ENCODE measurements at regions of chr1 and their contacts with region 1.

Region 1: GRCh38 chr1:93345633-93346420 is at the start of gene DR1:
- DNase-seq: peak; percentile 93 to 97
- ATAC-seq: peak; percentile 88 to 94
- H3K4me3 ChIP-seq: peak within 1 kb of the TSS; percentile 82 to 97 (median 94)
- H3K27ac ChIP-seq: peak within 1 kb of the TSS; percentile 95 to 98 (median 96)
- H3K4me1 ChIP-seq: peaks cover 24 to 39% of the 10 kb centered on the region in 2 donors
- H3K27me3 ChIP-seq: no peaks in the 10 kb centered on the region
- CTCF ChIP-seq: no peak
- POLR2A ChIP-seq: peak; percentile 80 to 83
- total RNA-seq, gene DR1: 26.8 to 59.1 (median 37.9) TPM

Region 2: DNA sequence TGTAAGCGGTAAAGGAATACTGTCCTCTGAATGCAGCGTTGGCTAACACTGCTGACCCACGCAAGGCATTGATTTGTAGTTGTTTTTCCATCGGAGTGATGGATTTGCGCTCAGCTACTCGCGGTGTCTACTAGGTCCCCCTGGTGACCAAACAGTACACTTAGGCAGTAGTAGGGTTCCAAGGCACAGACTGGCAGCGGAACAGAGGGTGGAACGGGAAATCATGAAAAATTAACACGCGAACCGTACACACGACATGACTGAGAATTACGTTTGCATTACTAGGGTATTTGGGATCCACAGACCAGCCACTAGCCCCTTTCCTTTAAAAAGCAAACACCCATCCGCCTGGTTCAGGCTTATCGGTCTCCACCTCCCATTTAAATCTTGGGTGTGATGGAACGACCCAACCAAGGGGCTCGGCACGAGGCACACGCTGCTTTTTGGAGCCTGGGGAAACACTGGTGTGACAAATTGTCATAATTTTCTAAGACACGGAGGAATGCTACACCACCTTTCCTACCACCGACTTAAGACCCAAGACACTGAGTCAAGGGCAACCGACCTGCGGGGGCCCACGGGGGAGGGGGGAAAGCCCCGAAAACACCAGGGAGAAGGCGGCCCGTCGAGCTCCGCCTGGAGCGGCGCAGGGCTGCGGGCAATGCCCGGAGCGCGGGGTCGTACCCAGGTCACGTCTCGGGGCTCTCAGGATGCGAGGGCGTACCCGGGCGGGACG is 385.3 kb before region 1 on chr1:
- in situ Hi-C with region 1: no loop called
- intact Hi-C with region 1: loop called (anchors 10 kb)
- DNase-seq: peak; percentile 53 to 66
- ATAC-seq: peak; percentile 71 to 73
- H3K4me3 ChIP-seq: peak overlapping the region; percentile 77 to 94 (median 84)
- H3K27ac ChIP-seq: peak overlapping the region; percentile 84 to 92 (median 90)
- H3K4me1 ChIP-seq: peaks cover 19 to 23% of the 10 kb centered on the region in 2 donors
- H3K27me3 ChIP-seq: no peaks in the 10 kb centered on the region
- CTCF ChIP-seq: peak; percentile 47 to 71 (median 58)
- POLR2A ChIP-seq: peak in 1 of 2 donors; percentile 21

Region 3: DNA sequence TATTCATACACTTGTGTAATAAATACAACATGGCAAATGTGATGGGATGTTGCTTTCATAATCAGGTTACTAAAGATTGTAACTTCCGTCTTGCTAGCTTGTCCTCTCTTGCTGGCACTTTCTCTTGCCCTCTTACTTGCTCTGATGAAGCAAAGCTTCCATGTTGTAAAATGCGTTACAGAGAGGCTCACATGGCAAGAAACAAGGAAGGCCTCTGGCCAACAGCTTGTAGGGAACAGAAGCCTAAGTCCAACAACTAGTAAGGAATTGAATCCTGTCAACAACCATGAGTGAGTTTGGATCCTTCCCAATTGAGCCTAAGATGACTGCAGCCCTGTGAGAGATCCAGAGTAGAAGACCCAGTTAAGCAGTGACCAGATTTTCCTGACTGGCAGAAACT is 181.0 kb before region 1 on chr1:
- in situ Hi-C with region 1: no loop called
- intact Hi-C with region 1: loop called (anchors 5 kb)
- DNase-seq: peak in 1 of 2 donors; percentile 28
- ATAC-seq: peak; percentile 60 to 76
- H3K4me3 ChIP-seq: no peak overlapping the region
- H3K27ac ChIP-seq: peak overlapping the region; percentile 65 to 82 (median 75)
- H3K4me1 ChIP-seq: peaks cover 29 to 41% of the 10 kb centered on the region in 2 donors
- H3K27me3 ChIP-seq: no peaks in the 10 kb centered on the region
- CTCF ChIP-seq: no peak
- POLR2A ChIP-seq: no peak

Region 4: GRCh38 chr1:93408203-93408602 is 62.4 kb after region 1 on chr1:
- in situ Hi-C with region 1: no loop called
- intact Hi-C with region 1: no loop called
- DNase-seq: no peak
- ATAC-seq: no peak
- H3K4me3 ChIP-seq: no peak overlapping the region
- H3K27ac ChIP-seq: no peak overlapping the region
- H3K4me1 ChIP-seq: no peaks in the 10 kb centered on the region
- H3K27me3 ChIP-seq: no peaks in the 10 kb centered on the region
- CTCF ChIP-seq: no peak
- POLR2A ChIP-seq: no peak

Region 5: GRCh38 chr1:93419344-93419743 is 73.5 kb after region 1 on chr1:
- in situ Hi-C with region 1: no loop called
- intact Hi-C with region 1: no loop called
- DNase-seq: no peak
- ATAC-seq: no peak
- H3K4me3 ChIP-seq: no peak overlapping the region
- H3K27ac ChIP-seq: no peak overlapping the region
- H3K4me1 ChIP-seq: no peaks in the 10 kb centered on the region
- H3K27me3 ChIP-seq: no peaks in the 10 kb centered on the region
- CTCF ChIP-seq: no peak
- POLR2A ChIP-seq: no peak

Region 6: DNA sequence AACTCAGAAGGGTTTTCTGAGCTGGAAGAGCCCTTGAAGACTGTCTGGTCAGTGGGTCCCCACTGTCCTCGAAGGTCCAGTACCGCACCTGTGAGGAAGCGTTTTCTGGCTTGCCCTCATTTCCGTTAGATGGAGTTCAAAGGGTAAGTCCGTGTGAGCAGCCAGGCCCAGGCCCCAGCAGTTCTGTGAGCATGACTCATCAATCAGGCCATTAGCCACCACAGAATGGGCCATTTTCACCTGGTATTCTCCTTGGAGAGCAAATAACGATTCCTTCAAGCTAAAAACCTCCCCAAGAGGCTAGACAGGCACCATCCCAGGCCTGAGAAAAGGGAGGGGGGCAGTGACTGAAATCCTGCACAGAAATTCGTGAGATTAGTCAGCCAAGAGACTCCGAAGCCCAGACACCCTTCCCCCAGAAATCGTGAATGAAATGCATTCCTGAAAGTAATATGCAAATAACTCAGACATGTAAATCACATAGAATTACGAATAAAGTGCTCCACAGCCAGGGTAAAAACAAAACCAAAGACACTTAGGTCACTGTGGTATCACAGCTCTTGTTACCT is 269.8 kb after region 1 on chr1:
- in situ Hi-C with region 1: no loop called
- intact Hi-C with region 1: loop called (anchors 5 kb)
- DNase-seq: no peak
- ATAC-seq: no peak
- H3K4me3 ChIP-seq: no peak overlapping the region
- H3K27ac ChIP-seq: peak overlapping the region; percentile 84 to 90 (median 87)
- H3K4me1 ChIP-seq: peaks cover 58 to 71% of the 10 kb centered on the region in 2 donors
- H3K27me3 ChIP-seq: no peaks in the 10 kb centered on the region
- CTCF ChIP-seq: no peak
- POLR2A ChIP-seq: no peak

Region 7: GRCh38 chr1:93878889-93879586 is 533.2 kb after region 1 on chr1 and contains the start of gene DNTTIP2:
- in situ Hi-C with region 1: no loop called
- intact Hi-C with region 1: loop called (anchors 10 kb)
- DNase-seq: peak; percentile 80 to 84
- ATAC-seq: peak; percentile 94 to 97
- H3K4me3 ChIP-seq: peak within 1 kb of the TSS; percentile 80 to 99 (median 87)
- H3K27ac ChIP-seq: peak within 1 kb of the TSS; percentile 91 to 98 (median 94)
- H3K4me1 ChIP-seq: peaks cover 30 to 35% of the 10 kb centered on the region in 2 donors
- H3K27me3 ChIP-seq: no peaks in the 10 kb centered on the region
- CTCF ChIP-seq: no peak
- POLR2A ChIP-seq: peak; percentile 84 to 89
- total RNA-seq, gene DNTTIP2: 50.4 to 75.3 (median 59.1) TPM

Region 8: DNA sequence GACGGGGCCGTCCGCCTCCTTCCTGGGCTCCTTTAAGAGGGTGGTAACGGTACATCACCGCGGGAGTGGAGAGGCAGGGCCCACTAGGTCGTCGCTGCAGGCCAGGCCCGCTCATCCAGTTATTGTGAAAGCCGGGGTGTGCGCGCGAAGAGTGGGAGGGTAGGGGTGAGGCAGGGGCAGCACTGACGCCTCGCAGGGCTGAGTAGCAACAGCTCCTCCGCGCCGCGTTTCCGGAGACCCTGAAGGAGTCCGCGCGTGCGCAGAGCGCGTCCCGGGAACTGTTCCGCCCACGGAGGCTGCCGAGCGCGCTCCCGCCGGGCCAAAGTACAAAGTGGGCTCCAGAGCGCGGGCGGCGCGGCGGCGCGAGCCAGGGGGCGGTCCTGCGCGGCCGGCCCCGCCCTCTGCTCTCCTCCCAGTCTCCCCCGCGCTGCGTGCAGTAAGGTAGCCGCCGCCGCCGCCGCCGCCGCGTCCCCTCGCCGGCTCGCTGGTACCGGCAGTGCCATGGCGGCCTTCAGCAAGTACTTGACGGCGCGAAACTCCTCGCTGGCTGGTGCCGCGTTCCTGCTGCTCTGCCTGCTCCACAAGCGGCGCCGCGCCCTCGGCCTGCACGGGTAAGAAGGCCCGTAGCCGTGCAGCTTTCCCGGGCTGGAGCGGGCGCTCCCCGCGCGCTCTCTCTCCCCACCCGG is 1072.3 kb after region 1 on chr1 and contains the start of gene ABCD3:
- in situ Hi-C with region 1: no loop called
- intact Hi-C with region 1: loop called (anchors 5 kb)
- DNase-seq: peak; percentile 93 to 97
- ATAC-seq: peak; percentile 89 to 91
- H3K4me3 ChIP-seq: peak within 1 kb of the TSS; percentile 91 to 98 (median 94)
- H3K27ac ChIP-seq: peak within 1 kb of the TSS; percentile 86 to 93 (median 88)
- H3K4me1 ChIP-seq: peaks cover 33 to 37% of the 10 kb centered on the region in 2 donors
- H3K27me3 ChIP-seq: no peaks in the 10 kb centered on the region
- CTCF ChIP-seq: no peak
- POLR2A ChIP-seq: peak; percentile 83 to 91
- total RNA-seq, gene ABCD3: 33.4 to 42.8 (median 36.6) TPM